ENCODE measurements at regions of chrX and their contacts with region 1.

Region 1: DNA sequence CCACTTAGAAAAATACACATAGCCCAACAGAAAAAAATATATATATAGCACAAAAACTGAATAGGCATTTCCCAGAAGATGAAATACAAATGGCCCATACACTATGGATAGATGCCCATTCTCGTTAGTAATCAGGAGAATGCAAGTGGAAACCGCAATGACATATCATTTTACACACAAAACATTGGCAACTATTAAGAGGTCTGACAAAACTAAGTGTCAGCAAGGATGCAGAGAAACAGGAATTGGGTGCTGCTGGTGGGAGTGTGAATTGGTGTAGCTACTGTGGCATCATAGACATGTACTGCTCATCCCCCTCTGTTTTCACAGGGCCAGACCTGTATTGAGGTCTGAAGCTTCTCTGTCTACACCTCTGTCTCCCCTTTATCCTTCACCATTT is 320.0 kb downstream of the IDS start:
- DNase-seq: no peak
- H3K4me3 ChIP-seq: no peak overlapping the region
- H3K27ac ChIP-seq: no peak overlapping the region
- H3K27me3 ChIP-seq: no peaks in the 10 kb centered on the region
- CTCF ChIP-seq: no peak

Region 2: DNA sequence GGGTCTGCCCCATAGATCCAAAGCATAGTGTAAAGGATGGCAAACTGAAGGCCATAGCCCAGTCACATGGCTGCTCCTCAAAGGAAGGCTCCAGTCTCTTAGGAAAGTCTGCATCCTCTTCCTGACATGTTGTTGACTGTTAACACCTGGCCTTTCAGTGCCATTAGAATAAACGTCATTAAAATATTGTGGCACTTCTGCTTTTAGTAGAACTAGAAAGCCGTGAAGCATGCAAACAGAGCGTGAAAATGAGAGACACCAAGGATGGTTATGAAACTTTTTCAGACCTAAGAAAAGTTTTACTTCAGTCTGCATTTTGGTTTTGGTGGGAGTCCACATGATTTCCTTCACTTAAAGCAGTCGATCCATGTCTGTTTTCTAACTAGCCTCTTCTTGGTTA is 725.7 kb before region 1 on chrX:
- CTCF ChIA-PET with region 1: interaction called, 14 read pairs
- POLR2A ChIA-PET with region 1: no interaction called
- DNase-seq: no peak
- H3K4me3 ChIP-seq: no peak overlapping the region
- H3K27ac ChIP-seq: no peak overlapping the region
- H3K27me3 ChIP-seq: no peaks in the 10 kb centered on the region
- CTCF ChIP-seq: no peak

Region 3: GRCh38 chrX:148958901-148959300 is 226.2 kb before region 1 on chrX:
- CTCF ChIA-PET with region 1: no interaction called
- POLR2A ChIA-PET with region 1: no interaction called
- DNase-seq: no peak
- H3K4me3 ChIP-seq: no peak overlapping the region
- H3K27ac ChIP-seq: no peak overlapping the region
- H3K27me3 ChIP-seq: no peaks in the 10 kb centered on the region
- CTCF ChIP-seq: no peak